ENCODE measurements at regions of chr1 and their contacts with region 1.

Region 1: DNA sequence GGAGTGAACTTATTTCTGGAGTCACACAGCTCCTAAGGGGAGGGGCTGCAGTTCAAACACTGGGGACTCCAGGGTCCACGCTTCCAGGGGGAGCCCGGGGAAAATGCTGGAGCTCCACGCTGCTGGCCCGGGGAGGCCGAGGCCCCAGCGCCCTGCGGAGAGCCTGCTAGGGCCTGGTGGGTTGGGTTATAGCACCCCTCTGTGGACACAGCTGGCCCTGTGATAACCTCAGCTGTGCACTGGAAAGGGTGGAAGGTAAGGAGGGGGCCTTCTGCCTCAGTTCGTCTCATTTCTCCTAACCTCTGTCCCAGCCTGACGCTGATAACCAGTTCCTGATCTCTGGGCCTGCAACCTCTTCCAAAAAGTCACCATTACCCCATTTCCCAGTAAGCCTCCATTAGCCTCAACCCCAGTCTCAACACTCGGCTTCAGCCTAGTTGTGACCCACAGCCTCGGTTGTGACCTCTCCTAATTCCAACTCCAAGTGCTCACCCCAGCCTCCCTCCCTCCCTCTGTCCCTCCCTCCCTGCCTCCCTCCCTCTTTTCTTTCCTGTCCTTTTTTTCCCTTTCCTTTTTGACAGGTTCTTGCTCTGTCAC is 7.1 kb downstream of the NBL1 start:
- DNase-seq: peak in 1 of 2 donors; percentile 55
- ATAC-seq: no peak

Region 2: DNA sequence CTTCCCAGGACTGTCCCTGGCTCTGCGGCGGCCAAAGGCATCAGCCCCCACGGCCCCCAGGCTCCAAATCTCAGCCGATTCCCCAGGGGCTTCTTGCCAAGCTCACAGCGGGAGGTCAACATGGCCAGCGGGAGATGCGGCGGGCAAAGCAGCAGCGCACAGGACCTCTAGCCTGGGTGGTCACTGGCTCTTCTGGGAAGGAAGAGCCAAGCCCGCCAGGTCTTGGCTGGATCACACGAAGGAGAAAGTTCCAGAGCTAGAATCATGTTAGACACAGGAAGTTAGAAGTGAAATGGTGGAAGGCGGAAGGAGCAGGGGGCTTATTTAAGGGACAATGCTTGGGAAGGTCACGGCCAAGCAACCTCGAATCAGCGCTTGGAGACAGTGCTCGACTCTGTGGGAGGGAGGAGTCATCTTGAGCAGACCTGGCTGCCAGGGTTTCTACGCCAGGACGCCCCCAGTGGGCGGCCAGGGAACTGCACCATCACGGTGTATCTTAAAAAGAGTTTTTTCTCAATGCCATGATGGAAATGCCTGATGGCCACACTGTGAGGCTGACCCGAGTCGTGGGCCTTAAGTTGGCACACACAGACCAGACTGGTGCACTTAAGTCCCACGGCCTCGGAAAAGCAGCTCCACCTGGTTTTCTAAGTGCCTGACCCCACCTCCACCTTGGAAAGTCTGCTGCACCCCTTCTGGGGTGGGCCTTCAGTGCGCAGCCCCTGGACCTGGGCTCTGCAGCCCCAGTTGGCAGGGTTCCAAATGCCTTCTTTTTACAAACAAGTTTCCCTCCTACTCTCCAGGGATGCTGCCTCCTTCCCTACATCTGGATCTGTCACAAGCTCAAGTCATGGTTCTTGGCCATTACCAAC is 309.8 kb before region 1 on chr1:
- intact Hi-C with region 1: loop called (anchors 5 kb)
- DNase-seq: peak; percentile 64 to 80
- ATAC-seq: peak; percentile 59